OCI-LY7 (cell line): ENCODE measurements at regions of chr22 and their contacts with region 1.

Region 1: DNA sequence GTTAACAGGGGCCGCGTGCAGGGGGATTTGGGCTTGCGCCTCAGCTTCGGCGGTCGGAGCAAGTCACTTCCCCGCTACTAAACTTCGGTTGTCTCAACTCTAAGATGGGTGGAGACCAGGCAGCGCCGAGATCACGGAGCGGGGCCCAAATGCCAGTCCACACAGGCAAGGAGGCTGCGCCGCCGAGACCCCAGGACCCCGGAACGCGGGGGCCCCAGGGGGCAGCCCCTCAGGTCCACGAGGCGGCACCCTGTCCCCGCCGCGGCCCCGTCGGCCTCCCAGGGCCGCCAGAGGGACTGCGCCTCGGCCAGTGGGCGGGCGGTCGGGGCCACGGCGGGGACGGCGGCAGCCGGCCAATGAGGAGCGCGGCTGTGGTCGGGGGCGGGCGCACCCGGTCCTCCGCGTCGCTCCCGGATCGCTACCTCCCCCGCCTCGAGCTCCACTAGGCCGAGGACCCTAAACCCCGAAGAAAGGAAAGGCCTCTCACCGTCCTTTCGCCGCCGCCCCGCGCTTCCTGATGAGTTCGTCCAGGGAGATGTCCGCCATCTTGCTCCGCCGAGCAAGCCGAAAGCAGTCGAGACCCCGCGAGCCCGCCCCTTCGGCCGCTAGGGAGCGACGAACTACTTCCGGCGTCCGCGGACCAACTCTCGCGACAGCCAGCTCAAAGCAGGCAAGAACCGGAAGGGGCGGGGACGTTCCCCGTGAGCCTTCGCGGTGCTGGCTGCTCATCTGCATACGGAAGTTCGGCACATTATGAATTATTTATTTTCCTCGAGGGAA is at the start of gene POLDIP3:
- DNase-seq: peak; percentile 100
- H3K4me3 ChIP-seq: peak within 1 kb of the TSS; percentile 85
- H3K27ac ChIP-seq: peak within 1 kb of the TSS; percentile 92
- H3K4me1 ChIP-seq: peaks cover 34% of the 10 kb centered on the region
- CTCF ChIP-seq: peak; percentile 46
- total RNA-seq, gene POLDIP3: 52.7 and 70.7 TPM in 2 replicates

Region 2: DNA sequence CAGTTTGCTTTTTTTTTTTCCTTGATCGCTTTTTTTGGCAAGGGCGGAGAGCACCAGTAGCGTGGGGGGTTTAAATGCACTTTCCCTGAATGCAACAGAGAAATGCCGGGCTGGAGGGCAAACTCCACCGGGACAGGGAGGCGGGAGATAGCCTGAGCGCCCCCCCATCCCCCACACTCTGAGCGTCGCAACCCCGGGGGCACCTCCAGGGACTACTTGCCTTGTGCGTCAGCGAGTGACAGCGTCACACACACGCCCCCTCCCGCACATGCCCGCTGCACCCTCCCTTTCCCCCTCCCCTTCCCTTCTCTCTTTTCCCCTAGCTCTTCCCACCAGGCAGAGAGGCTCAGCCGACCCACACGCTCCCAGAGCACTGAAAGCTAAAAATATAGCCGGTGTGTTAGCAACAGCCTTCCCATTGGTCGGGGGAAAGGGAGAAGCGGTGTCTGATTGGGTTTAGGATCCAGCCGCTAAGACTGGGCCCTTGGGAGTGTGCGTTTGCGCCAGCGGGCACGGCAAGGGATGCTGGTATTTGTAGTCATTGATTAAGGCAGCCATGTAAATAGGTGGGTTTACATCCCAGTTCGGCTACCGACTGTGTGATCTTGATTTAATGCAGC is 1166.2 kb before region 1 on chr22:
- CTCF ChIA-PET with region 1: no interaction called
- POLR2A ChIA-PET with region 1: no interaction called
- intact Hi-C with region 1: loop called (anchors 10 kb)
- DNase-seq: peak; percentile 97
- H3K4me3 ChIP-seq: peak overlapping the region; percentile 83
- H3K27ac ChIP-seq: peak overlapping the region; percentile 85
- H3K4me1 ChIP-seq: peaks cover 14% of the 10 kb centered on the region
- CTCF ChIP-seq: no peak

Region 3: DNA sequence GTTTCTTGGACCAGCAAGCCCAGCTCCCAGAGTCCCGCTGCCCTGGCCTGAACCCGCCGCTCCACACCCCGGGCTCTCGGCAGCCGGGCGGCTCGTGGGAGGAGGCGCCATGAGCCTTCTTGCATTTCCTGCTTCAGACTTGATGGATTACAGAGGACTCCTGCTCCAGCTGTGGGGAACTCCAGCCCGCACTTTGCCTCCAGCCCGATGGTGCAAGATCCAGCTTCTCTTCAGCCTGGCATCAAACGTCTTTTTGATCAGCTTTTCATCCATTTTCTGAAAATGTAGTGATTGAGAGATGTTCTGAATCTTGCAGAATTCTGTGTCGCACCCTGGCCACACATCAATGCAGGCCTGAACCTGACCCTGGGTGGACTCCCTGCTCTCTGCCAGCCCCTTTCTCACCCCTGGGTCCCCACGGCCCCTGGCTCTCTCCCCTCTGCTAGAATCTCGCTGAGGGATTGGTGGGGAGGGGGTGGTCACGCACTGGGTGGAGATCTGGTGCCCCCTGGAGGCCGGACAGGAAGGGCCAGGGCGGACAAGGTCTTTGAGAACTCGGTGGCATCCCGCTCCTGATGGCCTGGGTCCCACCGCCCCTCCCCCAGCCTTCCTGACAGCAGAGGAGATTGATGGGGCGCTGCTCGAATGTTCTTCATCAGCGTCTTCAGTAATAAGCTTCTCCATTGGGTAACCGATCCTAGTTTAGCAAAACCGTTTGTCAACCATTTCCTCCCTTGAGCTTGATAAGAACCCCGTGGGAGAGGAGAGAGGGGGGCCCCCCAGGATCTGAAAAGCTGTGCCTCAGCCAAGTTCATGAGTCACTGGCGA is 170.2 kb before region 1 on chr22:
- CTCF ChIA-PET with region 1: no interaction called
- POLR2A ChIA-PET with region 1: no interaction called
- intact Hi-C with region 1: loop called (anchors 5 kb)
- DNase-seq: peak; percentile 90
- H3K4me3 ChIP-seq: peak overlapping the region; percentile 65
- H3K27ac ChIP-seq: peak overlapping the region; percentile 70
- H3K4me1 ChIP-seq: peaks cover 64% of the 10 kb centered on the region
- CTCF ChIP-seq: peak; percentile 83

Region 4: DNA sequence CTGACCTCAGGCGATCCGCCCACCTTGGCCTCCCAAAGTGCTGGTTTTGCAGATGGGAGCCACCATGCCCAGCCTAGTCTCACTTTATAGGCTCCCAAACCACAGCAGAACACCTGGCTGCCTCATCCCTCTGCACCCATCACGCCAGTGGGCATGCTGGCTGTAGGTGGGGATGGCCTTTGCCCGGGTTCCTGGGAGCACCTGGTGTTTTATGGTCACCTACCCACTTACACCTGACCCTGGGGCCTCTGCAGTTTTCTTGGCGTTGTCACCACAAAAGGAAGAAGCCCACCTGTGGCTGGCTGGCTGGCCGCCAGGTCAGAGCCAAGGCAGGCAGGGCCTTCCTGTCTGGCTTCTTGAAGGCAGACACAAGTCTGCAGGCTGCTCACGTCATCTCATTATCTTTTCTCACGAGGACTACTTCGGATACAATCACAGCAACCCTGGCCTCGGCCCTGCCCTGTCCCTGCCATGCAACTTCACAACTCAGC is 103.1 kb before region 1 on chr22:
- CTCF ChIA-PET with region 1: no interaction called
- POLR2A ChIA-PET with region 1: interaction called, 6 read pairs
- intact Hi-C with region 1: loop called (anchors 5 kb)
- DNase-seq: peak; percentile 53
- H3K4me3 ChIP-seq: no peak overlapping the region
- H3K27ac ChIP-seq: peak overlapping the region; percentile 68
- H3K4me1 ChIP-seq: peaks cover 49% of the 10 kb centered on the region
- CTCF ChIP-seq: no peak

Region 5: DNA sequence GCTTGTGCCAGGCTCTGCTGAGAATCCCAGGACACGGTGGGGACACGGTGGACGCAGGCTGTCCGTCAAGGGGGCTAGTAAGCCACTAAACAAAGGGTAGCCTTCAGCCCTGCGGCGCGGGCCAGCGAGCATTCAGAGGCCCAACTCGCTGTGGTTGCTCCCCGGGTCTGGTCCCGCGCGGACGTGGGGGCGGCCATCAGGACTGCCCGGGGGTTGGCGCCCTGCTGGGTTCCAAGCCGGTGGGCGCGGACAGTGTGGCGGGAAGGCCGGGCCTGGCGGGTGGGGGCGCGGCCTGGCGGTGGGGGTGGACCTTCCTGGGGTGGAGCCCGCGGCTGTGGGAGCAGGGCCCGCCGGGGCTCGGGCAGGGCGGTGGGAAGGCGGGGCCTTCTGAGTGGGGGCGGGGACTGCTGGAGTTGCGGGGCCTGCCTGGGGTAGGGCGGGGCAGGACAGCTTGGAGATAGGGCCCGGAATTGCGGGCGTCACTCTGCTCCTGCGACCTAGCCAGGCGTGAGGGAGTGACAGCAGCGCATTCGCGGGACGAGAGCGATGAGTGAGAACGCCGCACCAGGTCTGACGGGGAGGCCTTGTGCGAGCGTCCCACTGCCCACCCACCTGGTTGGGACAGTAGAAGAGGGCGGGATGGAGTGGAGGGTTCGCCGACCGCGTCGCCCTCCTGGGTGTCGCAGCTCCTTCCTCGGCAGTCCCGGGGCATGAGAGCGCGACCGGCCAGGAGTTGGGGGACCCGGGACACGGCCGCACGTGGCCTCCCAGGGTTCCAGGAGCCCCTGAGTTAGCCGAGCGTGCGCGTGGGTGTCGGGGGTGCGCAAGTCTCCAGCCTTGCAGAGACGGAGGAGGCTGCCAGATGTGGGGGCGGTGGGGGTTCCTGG is 60.8 kb before region 1 on chr22 and contains the start of gene SERHL2:
- CTCF ChIA-PET with region 1: no interaction called
- POLR2A ChIA-PET with region 1: interaction called, 3 read pairs
- intact Hi-C with region 1: loop called (anchors 2 kb)
- DNase-seq: peak; percentile 87
- H3K4me3 ChIP-seq: peak within 1 kb of the TSS; percentile 70
- H3K27ac ChIP-seq: peak within 1 kb of the TSS; percentile 99
- H3K4me1 ChIP-seq: peaks cover 51% of the 10 kb centered on the region
- CTCF ChIP-seq: no peak
- total RNA-seq, gene SERHL2: 93.9 and 98.0 TPM in 2 replicates

Region 6: GRCh38 chr22:42587588-42588175 is 26.8 kb before region 1 on chr22:
- CTCF ChIA-PET with region 1: no interaction called
- POLR2A ChIA-PET with region 1: no interaction called
- intact Hi-C with region 1: no loop called
- DNase-seq: no peak
- H3K4me3 ChIP-seq: no peak overlapping the region
- H3K27ac ChIP-seq: no peak overlapping the region
- H3K4me1 ChIP-seq: peaks cover 10% of the 10 kb centered on the region
- CTCF ChIP-seq: no peak